ENCODE measurements at regions of chr6 and their contacts with region 1.

Region 1: GRCh38 chr6:46626228-46626909 is 26.2 kb downstream of the CYP39A1 start:
- DNase-seq: no peak
- ATAC-seq: no peak

Region 2: GRCh38 chr6:46243754-46244153 is 382.6 kb before region 1 on chr6:
- intact Hi-C with region 1: no loop called
- DNase-seq: no peak
- ATAC-seq: peak; percentile 83

Region 3: DNA sequence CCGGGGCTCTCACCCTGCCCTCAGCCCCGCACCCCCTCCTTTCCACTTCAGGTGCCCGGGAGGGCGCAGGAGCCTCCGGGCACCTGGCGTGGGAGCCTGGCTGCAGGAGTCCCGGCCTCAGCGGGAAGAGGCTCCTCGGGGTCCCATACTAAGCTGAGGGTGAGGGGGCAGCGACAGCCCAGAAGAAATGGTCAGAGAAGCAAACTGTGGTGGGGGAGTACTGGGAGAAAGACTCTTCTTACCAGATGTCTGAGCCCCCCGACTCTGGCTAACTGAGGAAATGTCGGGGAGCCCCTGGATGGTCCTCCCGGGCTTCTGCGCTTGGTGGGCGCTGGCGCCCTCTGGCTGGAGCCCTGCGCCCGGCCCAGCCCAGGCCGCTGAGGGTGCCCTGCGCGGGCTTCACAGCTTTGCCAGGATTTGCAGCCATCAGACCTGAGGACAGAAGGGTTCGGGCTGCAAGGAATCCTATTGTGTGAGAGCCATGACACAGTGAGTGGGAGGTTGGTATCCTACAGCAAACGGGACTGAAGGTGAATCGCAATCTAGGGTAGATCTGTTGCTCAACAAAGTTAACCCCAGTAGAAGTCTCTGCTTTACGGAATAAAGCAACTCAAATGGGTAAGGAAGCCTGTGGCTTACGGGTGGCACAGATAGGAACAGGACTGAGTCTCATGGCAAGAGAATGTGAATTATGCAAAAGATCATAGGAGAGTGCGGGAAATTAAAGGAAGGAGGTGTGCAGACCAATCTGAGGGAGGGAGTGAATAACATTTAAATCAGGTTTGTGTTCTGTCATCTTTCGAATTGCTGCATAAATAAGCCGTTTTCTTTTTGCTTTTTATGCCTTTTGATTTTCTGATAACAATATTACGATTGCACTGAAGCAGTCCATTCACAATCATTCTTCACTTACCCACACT is 134.5 kb before region 1 on chr6:
- intact Hi-C with region 1: loop called (anchors 5 kb)
- DNase-seq: peak; percentile 76
- ATAC-seq: peak; percentile 91